ENCODE measurements at regions of chr12 and their contacts with region 1.

Region 1: GRCh38 chr12:94753036-94753679 is 102.8 kb upstream of the TMCC3 start:
- DNase-seq: peak in 2 of 3 donors; percentile 53 to 68
- ATAC-seq: peak; percentile 55 to 97 (median 80)
- H3K4me3 ChIP-seq: no peak overlapping the region
- H3K27ac ChIP-seq: no peak overlapping the region
- H3K4me1 ChIP-seq: no peaks in the 10 kb centered on the region
- H3K27me3 ChIP-seq: no peaks in the 10 kb centered on the region
- CTCF ChIP-seq: peak in 1 of 4 donors; percentile 26
- POLR2A ChIP-seq: no peak

Region 2: DNA sequence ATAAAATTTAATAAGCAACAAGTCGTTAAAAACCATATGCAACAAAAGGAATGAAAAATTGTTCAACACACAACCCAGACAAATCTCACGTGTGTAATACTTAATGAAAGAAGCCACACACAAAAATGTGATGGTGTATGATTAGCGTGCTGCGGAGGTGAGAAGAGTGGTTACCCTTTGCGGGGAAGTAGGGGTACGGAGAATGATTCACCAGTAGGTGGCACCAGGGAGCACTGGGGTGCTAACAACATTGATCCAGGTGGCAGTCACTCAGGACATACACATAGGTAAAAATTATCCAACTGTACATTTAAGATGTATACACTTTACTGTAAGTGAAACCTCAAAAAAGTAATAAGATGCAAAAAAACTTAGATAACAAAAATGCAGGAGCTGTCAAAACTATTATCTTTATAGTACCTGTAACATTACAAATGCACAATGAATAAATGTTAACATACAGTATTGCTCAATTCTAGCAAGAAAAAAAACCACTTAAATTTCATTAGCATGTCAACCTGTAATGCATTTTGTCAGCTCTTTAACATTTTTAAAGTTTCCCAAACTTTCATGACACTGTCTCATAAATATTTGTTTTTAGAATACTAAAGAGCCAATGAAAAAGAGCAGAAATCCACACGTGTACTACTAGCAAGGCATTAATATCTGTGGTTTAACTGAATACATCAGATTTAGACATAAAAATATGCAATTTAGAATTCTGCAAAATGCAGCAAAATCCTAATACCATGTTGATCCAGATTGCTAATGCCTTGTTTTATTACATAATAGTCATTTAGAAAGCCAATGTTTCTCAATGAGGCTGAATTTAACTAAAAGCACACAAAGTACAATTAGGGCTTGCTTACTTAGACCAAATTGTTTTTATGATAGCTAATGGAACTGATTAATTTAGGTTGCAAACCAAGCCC is 149.5 kb before region 1 on chr12:
- intact Hi-C with region 1: loop called in 1 of 2 experiments (anchors 10 kb)
- DNase-seq: peak in 2 of 3 donors; percentile 54 to 68
- ATAC-seq: peak; percentile 79 to 92 (median 90)
- H3K4me3 ChIP-seq: no peak overlapping the region
- H3K27ac ChIP-seq: no peak overlapping the region
- H3K4me1 ChIP-seq: no peaks in the 10 kb centered on the region
- H3K27me3 ChIP-seq: no peaks in the 10 kb centered on the region
- CTCF ChIP-seq: peak; percentile 56 to 87 (median 80)
- POLR2A ChIP-seq: no peak

Region 3: DNA sequence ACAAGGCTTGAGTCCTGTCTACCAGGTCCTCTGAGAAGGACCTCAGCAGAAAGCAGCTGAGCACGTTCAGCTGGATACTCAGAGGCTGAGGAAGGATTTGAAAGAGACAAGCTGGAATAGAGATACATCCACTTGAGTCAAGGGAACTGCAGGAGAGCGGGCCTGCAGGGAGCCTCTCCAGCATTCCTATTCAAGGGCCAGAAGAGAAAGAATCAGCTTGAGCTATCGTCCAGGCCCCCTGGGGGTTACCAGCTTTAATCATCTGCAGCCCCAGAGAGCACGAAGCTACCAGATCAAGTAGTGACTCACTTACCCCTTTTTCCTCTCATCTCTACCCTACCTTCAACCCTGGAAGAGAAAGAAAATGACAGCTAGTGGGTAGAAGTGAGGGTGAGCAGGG is 169.4 kb after region 1 on chr12:
- intact Hi-C with region 1: no loop called
- DNase-seq: no peak
- ATAC-seq: no peak
- H3K4me3 ChIP-seq: no peak overlapping the region
- H3K27ac ChIP-seq: no peak overlapping the region
- H3K4me1 ChIP-seq: no peaks in the 10 kb centered on the region
- H3K27me3 ChIP-seq: no peaks in the 10 kb centered on the region
- CTCF ChIP-seq: no peak
- POLR2A ChIP-seq: no peak

Measured in right lobe of liver (tissue), 6 donors.